Dorsolateral prefrontal cortex (tissue), 120 donors: ENCODE measurements at regions of chr3 and their contacts with region 1.

Region 1: GRCh38 chr3:56928379-56929068 is 126.8 kb upstream of the ARHGEF3 start:
- DNase-seq: no peak
- H3K4me3 ChIP-seq: no peak overlapping the region
- H3K27ac ChIP-seq: peak overlapping the region in 2 of 59 donors; percentile 2 to 33
- H3K27me3 ChIP-seq: no peaks in the 10 kb centered on the region
- CTCF ChIP-seq: no peak

Region 2: GRCh38 chr3:56894881-56895431 is 33.6 kb before region 1 on chr3:
- intact Hi-C with region 1: no loop called
- DNase-seq: peak in 8 of 10 donors; percentile 32 to 76 (median 68)
- H3K4me3 ChIP-seq: peak overlapping the region in 14 of 59 donors; percentile 2 to 41 (median 19)
- H3K27ac ChIP-seq: peak overlapping the region in 58 of 59 donors; percentile 1 to 94 (median 75)
- H3K27me3 ChIP-seq: no peaks in the 10 kb centered on the region
- CTCF ChIP-seq: peak in 1 of 56 donors; percentile 11

Region 3: DNA sequence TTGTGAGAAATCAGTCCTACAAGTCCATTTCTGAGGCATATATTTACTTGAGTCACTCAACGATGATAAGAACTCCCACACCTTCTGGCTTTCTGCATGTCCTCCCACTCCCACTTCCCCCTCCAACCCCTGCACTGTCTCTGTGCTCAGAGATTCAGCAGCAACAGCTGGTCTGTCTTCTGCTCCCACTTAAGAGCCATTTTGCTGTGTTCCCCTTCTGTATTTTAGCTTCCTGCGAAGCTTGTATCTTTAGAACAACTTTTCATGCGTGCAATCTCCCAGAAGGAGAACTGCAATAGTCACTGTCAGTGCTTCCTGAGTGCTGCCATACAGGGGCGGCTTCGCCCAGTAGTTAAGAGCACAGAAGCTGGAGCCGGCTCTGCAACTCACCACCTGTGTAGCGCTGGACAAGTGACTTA is 41.9 kb after region 1 on chr3:
- intact Hi-C with region 1: loop called (anchors 1 to 5 kb)
- DNase-seq: peak in 5 of 10 donors; percentile 30 to 62 (median 52)
- H3K4me3 ChIP-seq: no peak overlapping the region
- H3K27ac ChIP-seq: peak overlapping the region in 49 of 59 donors; percentile 11 to 90 (median 70)
- H3K27me3 ChIP-seq: no peaks in the 10 kb centered on the region
- CTCF ChIP-seq: no peak

Region 4: GRCh38 chr3:56980798-56981390 is 52.4 kb after region 1 on chr3:
- intact Hi-C with region 1: loop called in 1 of 2 experiments (anchors 5 kb)
- DNase-seq: peak in 3 of 10 donors; percentile 38 to 66 (median 38)
- H3K4me3 ChIP-seq: no peak overlapping the region
- H3K27ac ChIP-seq: no peak overlapping the region
- H3K27me3 ChIP-seq: no peaks in the 10 kb centered on the region
- CTCF ChIP-seq: no peak